T-cell (primary cell): ENCODE measurements at regions of chr7 and their contacts with region 1.

Region 1: GRCh38 chr7:2510909-2511768 is 8.4 kb upstream of the LFNG start:
- DNase-seq: peak in 34 of 35 experiments; percentile 45 to 80 (median 66)
- ATAC-seq: peak; percentile 28 to 62 (median 56)
- H3K4me3 ChIP-seq: peak overlapping the region; percentile 42 to 49
- H3K4me3 Mint-ChIP-seq: peak overlapping the region; percentile 72 to 83 (median 77)
- H3K27ac ChIP-seq: peak overlapping the region; percentile 92
- H3K27ac Mint-ChIP-seq: peak overlapping the region in 1 of 2 donors; percentile 97
- H3K4me1 ChIP-seq: peaks cover 40 to 69% of the 10 kb centered on the region in 2 experiments
- H3K4me1 Mint-ChIP-seq: peaks cover 53 to 69% (median 62%) of the 10 kb centered on the region in 3 donors
- H3K27me3 ChIP-seq: no peaks in the 10 kb centered on the region
- H3K27me3 Mint-ChIP-seq: no peaks in the 10 kb centered on the region

Region 2: GRCh38 chr7:2555121-2556052 is 44.2 kb after region 1 on chr7 and contains the start of gene BRAT1:
- CTCF ChIA-PET with region 1: interaction called in 1 of 2 experiments, 12 read pairs
- POLR2A ChIA-PET with region 1: no interaction called
- DNase-seq: peak; percentile 86 to 99 (median 95)
- ATAC-seq: peak; percentile 86 to 91 (median 89)
- H3K4me3 ChIP-seq: peak within 1 kb of the TSS; percentile 83 to 94
- H3K4me3 Mint-ChIP-seq: peak within 1 kb of the TSS; percentile 83 to 86 (median 85)
- H3K27ac ChIP-seq: peak within 1 kb of the TSS; percentile 97
- H3K27ac Mint-ChIP-seq: peak within 1 kb of the TSS; percentile 78 to 86
- H3K4me1 ChIP-seq: peaks cover 18 to 51% of the 10 kb centered on the region in 2 experiments
- H3K4me1 Mint-ChIP-seq: peaks cover 39 to 48% (median 41%) of the 10 kb centered on the region in 3 donors
- H3K27me3 ChIP-seq: no peaks in the 10 kb centered on the region
- H3K27me3 Mint-ChIP-seq: no peaks in the 10 kb centered on the region
- total RNA-seq, gene BRAT1: 23.6 to 46.2 (median 43.1) TPM